Dendritic cell treated with granulocyte-macrophage colony-stimulating factor and Interleukin-4, amounts not matched to agents 40 ng/mL and 50 ng/mL, for 4 days (primary cell): ENCODE measurements at regions of chr3 and their contacts with region 1.

Region 1: GRCh38 chr3:32143849-32144757 is 37.7 kb downstream of the GPD1L start:
- H3K4me3 Mint-ChIP-seq: no peak overlapping the region
- H3K27ac Mint-ChIP-seq: no peak overlapping the region
- H3K4me1 Mint-ChIP-seq: peaks cover 23% of the 10 kb centered on the region
- H3K27me3 Mint-ChIP-seq: no peaks in the 10 kb centered on the region

Region 2: DNA sequence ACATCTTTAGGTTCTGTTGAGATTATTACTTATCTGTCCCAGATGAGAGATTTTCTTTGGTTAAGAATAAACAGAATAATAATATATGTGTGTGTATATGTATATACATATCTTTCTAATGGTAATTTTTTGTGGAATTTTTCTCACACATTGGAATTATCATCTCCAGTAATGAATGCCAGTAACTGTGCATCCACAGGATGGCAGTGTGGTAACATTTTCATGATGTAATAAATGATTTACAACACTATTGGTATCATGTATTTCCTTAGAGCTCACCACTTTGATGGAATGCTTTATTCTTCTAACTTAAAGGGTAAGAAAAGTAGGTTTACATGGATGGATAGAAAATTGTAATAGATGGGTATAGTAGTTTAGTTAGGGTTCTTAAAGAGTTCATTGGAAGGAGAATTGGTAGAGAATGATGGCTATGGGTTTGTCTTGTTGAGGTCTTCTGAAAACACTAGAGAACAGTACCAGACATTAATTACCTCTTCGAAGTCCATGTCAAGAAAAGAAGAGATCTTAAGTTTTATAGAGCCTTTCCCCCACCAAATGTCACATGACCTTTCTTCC is 533.3 kb before region 1 on chr3:
- intact Hi-C with region 1: loop called (anchors 10 kb)
- H3K4me3 Mint-ChIP-seq: no peak overlapping the region
- H3K27ac Mint-ChIP-seq: no peak overlapping the region
- H3K4me1 Mint-ChIP-seq: peaks cover 26% of the 10 kb centered on the region
- H3K27me3 Mint-ChIP-seq: no peaks in the 10 kb centered on the region

Region 3: DNA sequence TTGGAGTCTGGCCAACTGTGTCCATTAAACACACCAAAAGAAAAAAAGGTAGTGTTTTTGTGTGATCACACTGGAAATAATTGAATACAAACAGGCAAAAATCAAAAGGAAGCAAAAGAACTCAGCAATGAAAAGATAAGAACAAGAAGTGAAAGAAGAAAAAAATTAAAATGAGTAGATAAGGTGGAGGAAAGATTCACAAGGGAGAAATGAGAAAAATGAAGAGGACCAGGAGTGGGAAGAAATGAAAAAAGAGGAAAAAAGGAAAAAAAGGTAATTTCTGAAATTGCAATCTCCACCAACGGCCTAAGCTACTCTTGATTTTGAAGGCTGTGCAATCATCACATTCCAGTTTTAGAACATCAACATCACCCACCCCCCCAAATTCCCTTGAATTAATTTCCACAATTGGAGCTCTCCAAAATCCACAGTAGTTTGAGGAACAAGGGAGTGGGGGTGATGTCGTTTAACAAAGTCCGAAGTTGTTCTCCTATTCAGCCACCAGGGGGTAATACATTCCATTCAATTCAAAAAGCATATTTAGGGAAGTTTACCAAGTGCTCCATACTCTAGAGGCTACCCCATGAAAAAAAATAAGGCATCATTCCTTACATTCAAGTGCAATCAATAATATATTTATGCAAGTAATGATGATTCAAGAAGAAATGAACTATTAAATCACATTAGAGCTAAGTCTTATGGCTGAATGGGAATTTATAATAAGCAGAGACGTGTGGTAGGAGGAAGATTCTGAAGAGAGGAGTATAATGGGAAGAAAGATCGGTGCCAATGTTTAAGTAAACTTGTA is 125.1 kb before region 1 on chr3:
- intact Hi-C with region 1: loop called (anchors 1 kb)
- H3K4me3 Mint-ChIP-seq: no peak overlapping the region
- H3K27ac Mint-ChIP-seq: no peak overlapping the region
- H3K4me1 Mint-ChIP-seq: no peaks in the 10 kb centered on the region
- H3K27me3 Mint-ChIP-seq: peaks cover 2% of the 10 kb centered on the region